OCI-LY7 (cell line): ENCODE measurements at regions of chr2 and their contacts with region 1.

Region 1: GRCh38 chr2:162297925-162298552 is 20.4 kb downstream of the IFIH1 start:
- DNase-seq: peak; percentile 71
- H3K4me3 ChIP-seq: no peak overlapping the region
- H3K27ac ChIP-seq: no peak overlapping the region
- H3K4me1 ChIP-seq: no peaks in the 10 kb centered on the region
- CTCF ChIP-seq: peak; percentile 89

Region 2: GRCh38 chr2:161938339-161938738 is 359.7 kb before region 1 on chr2:
- CTCF ChIA-PET with region 1: no interaction called
- POLR2A ChIA-PET with region 1: no interaction called
- intact Hi-C with region 1: no loop called
- DNase-seq: no peak
- H3K4me3 ChIP-seq: no peak overlapping the region
- H3K27ac ChIP-seq: no peak overlapping the region
- H3K4me1 ChIP-seq: no peaks in the 10 kb centered on the region
- CTCF ChIP-seq: no peak

Region 3: GRCh38 chr2:162013514-162014475 is 284.2 kb before region 1 on chr2:
- CTCF ChIA-PET with region 1: no interaction called
- POLR2A ChIA-PET with region 1: no interaction called
- intact Hi-C with region 1: no loop called
- DNase-seq: no peak
- H3K4me3 ChIP-seq: no peak overlapping the region
- H3K27ac ChIP-seq: no peak overlapping the region
- H3K4me1 ChIP-seq: no peaks in the 10 kb centered on the region
- CTCF ChIP-seq: no peak

Region 4: DNA sequence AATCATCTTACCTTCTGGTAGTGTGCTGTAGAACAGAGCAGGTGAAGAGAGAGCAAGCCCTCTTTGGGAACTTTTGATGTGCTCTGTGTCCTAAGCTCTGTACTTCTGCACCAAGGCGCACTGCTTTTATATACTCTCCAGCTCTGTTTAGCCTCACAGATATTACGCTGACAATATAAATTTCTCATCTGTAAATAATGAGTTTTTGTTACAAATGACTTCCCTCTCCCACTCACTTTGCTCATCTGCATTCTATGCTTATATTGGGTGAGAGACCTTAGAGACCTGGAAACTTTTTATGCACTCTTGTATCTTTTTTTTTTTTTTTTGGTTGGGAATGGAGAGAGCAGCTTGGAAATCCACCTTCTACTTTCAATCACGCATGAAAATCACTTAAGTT is 145.9 kb before region 1 on chr2 and contains the start of gene GCG:
- CTCF ChIA-PET with region 1: no interaction called
- POLR2A ChIA-PET with region 1: no interaction called
- intact Hi-C with region 1: loop called (anchors 1 kb)
- DNase-seq: no peak
- H3K4me3 ChIP-seq: no peak within 1 kb of the TSS
- H3K27ac ChIP-seq: no peak within 1 kb of the TSS
- H3K4me1 ChIP-seq: no peaks in the 10 kb centered on the region
- CTCF ChIP-seq: no peak
- total RNA-seq, gene GCG: not detected in 2 replicates

Region 5: DNA sequence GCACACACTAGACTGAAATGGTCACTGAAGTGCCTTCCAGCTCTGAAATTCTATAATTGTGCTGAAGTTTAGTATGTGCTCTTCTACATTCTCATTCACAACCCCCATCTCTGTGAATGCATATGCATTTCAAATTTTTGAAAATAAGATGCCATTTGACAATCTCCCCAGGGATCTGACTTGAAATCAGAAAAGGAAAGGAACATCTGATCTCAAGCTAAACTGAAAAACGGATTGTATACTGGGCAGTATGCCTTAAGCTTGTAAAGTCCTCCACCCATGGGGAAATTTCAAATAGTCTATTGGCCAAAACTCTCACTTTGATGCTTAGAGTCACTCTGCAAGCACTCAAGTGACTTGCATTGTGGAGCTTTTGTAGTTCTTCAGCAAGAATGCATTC is 77.7 kb before region 1 on chr2:
- CTCF ChIA-PET with region 1: interaction called, 3 read pairs
- POLR2A ChIA-PET with region 1: no interaction called
- intact Hi-C with region 1: loop called (anchors 1 kb)
- DNase-seq: no peak
- H3K4me3 ChIP-seq: no peak overlapping the region
- H3K27ac ChIP-seq: no peak overlapping the region
- H3K4me1 ChIP-seq: no peaks in the 10 kb centered on the region
- CTCF ChIP-seq: no peak

Region 6: GRCh38 chr2:162280654-162281053 is 17.4 kb before region 1 on chr2:
- CTCF ChIA-PET with region 1: no interaction called
- POLR2A ChIA-PET with region 1: no interaction called
- intact Hi-C with region 1: no loop called
- DNase-seq: no peak
- H3K4me3 ChIP-seq: no peak overlapping the region
- H3K27ac ChIP-seq: no peak overlapping the region
- H3K4me1 ChIP-seq: no peaks in the 10 kb centered on the region
- CTCF ChIP-seq: peak; percentile 48; the same call in 1 of the 2 replicates

Region 7: DNA sequence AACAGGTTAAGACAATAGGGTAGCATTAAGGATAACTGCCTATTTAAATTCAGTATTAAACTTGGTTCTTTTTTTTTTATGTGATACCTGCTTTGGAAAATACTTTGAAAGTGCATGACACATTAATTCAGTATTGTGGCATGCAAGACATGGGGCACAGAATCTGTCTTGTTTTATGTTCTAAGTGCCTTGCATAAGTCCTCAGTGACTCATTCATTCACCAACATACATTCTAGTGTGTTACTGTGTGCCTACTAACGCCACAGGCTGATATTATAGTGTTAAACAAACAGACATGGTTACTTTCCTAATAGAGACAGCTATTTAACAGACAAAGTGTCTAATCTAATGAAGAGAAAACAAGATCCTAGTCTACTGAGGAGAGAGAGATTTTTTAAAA is 137.6 kb after region 1 on chr2:
- CTCF ChIA-PET with region 1: no interaction called
- POLR2A ChIA-PET with region 1: no interaction called
- intact Hi-C with region 1: no loop called
- DNase-seq: no peak
- H3K4me3 ChIP-seq: no peak overlapping the region
- H3K27ac ChIP-seq: no peak overlapping the region
- H3K4me1 ChIP-seq: no peaks in the 10 kb centered on the region
- CTCF ChIP-seq: no peak